Posterior cingulate gyrus (tissue), 11 donors: ENCODE measurements at regions of chr4 and their contacts with region 1.

Region 1: GRCh38 chr4:87390891-87391575 is at the start of gene HSD17B11:
- DNase-seq: peak; percentile 71 to 97 (median 84)

Region 2: GRCh38 chr4:87422104-87423052 is 31.3 kb after region 1 on chr4 and contains the start of gene NUDT9:
- intact Hi-C with region 1: loop called (anchors 2 kb)
- DNase-seq: peak; percentile 91 to 99 (median 94)

Region 3: DNA sequence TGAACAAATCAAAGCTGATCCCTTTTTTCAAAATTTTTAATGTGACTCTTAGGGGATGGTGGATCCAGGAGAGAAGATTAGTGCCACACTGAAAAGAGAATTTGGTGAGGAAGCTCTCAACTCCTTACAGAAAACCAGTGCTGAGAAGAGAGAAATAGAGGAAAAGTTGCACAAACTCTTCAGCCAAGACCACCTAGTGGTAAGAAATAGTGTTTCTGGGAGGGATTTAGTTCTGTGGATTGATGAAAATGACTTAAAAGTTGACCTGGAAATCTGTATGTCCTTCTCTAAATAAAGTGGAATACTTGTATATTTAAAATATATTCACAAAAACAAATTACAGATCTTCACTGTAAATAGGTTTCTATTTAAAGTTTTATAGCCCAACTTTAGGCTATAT is 60.5 kb after region 1 on chr4:
- intact Hi-C with region 1: no loop called
- DNase-seq: no peak